A673 (cell line): ENCODE measurements at regions of chrX and their contacts with region 1.

Region 1: DNA sequence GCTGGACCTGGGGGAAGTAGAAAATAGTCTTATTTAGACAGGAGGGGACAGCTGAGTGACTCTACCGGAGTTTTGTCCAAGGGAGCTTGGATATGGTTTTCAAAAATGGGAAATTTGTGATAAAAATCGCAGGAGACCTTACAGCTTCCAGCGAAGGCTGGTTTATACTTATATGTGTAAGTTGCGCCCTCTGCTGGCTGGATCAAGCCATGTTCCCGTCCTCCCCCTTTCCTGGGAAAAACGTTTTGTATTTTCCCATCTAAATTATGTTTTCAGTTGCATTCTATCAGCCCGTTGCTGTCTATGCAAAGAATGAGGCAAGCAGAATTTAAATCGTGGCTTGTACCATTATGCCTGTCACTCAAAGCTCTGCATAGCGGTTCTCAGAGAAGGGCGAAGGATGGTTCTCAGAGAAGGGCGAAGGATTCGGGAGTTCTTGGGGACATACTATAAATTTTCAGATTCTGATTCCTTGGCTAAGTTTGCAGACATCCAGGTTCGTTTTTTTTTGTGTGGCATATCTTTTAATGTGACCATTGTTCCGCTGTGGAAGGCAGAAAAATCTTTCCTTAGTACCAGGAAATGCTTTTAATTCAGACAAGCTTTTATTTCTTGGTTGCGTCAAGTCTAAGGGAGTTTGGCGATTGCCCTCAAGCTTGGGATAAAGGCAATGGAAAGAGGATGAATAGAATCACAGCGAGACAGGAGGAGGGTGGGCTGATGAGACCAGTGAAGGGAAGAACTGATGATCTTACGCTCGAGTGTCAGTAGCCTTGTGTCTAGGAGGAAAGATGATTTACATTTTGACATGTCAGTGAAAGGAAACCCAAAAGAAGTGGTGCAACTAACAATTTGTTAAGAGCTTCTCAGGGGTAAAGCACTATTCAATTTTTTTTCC is 128.5 kb upstream of the ARX start:
- DNase-seq: peak; percentile 89
- H3K4me3 ChIP-seq: peak overlapping the region; percentile 38
- H3K27ac ChIP-seq: peak overlapping the region; percentile 85
- H3K4me1 ChIP-seq: peaks cover 42% of the 10 kb centered on the region
- H3K27me3 ChIP-seq: no peaks in the 10 kb centered on the region
- CTCF ChIP-seq: peak; percentile 93

Region 2: DNA sequence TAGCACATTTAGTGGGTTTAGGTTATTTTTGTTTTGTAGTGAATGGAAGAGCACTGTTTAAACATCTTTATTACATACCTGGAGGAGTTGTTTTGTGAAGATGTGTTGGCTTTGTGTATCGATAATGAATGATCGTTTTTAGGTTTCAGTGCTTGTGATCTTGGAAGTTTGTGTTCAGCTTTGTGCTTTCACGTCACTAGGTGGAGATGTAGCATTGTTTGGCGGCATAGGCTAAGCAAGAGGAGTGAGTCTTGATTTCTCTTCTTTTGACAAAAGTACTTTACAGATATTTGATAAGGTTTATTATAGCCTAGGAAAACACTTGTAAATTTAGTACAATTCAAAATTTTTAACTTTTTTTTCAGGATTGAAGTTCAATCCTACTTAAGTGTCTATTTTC is 628.8 kb before region 1 on chrX:
- CTCF ChIA-PET with region 1: no interaction called
- POLR2A ChIA-PET with region 1: no interaction called
- intact Hi-C with region 1: loop called (anchors 10 kb)
- DNase-seq: peak; percentile 39
- H3K4me3 ChIP-seq: no peak overlapping the region
- H3K27ac ChIP-seq: no peak overlapping the region
- H3K4me1 ChIP-seq: no peaks in the 10 kb centered on the region
- H3K27me3 ChIP-seq: peaks cover 18% of the 10 kb centered on the region
- CTCF ChIP-seq: peak; percentile 57

Region 3: GRCh38 chrX:24748202-24748843 is 396.0 kb before region 1 on chrX:
- CTCF ChIA-PET with region 1: interaction called, 5 read pairs
- POLR2A ChIA-PET with region 1: no interaction called
- intact Hi-C with region 1: loop called (anchors 2 kb)
- DNase-seq: no peak
- H3K4me3 ChIP-seq: no peak overlapping the region
- H3K27ac ChIP-seq: no peak overlapping the region
- H3K4me1 ChIP-seq: no peaks in the 10 kb centered on the region
- H3K27me3 ChIP-seq: peaks cover 9% of the 10 kb centered on the region
- CTCF ChIP-seq: no peak

Region 4: GRCh38 chrX:24990535-24990934 is 153.8 kb before region 1 on chrX:
- CTCF ChIA-PET with region 1: no interaction called
- POLR2A ChIA-PET with region 1: no interaction called
- intact Hi-C with region 1: no loop called
- DNase-seq: peak; percentile 93
- H3K4me3 ChIP-seq: no peak overlapping the region
- H3K27ac ChIP-seq: no peak overlapping the region
- H3K4me1 ChIP-seq: peaks cover 25% of the 10 kb centered on the region
- H3K27me3 ChIP-seq: peaks cover 14% of the 10 kb centered on the region
- CTCF ChIP-seq: peak; percentile 53; the same call in 1 of the 2 replicates

Region 5: DNA sequence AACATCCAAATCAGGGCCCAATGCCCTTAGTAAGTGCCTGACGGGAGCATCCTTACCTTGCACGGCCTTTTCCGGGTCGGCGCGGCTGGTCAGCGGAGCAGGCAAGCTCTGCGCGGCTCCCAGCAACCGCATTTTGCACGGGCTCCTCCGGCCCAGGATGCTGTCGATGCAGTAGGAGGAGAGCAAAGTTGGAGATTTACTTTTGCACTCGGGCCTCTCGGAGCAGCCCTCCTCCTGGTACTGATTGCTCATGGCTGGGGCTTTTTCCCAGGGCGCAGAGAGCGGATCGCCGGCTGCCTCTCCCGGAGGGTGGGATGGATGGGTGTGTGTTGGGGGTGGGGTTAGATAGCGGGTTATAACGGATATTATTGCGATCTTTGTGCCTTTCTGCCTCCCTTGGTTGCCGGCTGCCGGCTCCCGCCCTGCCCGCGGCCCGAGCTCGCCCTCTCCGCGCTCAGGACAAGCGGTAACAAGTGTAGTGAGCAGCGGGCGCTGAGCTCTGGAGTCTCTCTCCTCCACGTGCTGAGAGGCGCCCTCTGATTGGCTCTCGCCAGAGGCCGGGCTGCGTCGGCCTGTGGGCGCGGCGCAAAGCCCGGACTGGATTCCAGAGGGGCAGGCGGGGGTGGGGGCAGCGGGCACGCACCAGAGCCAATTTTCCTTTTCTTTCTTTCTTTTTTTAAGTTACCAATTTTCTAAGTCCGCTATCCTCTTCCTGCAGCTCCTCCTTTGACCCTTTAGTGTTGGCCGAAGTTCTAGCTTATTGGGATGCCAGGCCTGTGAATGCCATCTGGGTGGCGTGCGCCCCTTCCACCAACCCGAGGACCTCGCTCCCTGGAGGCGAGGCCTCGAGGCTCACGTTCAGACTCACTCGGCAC is 128.6 kb before region 1 on chrX and contains the start of gene ARX:
- CTCF ChIA-PET with region 1: interaction called, 5 read pairs
- POLR2A ChIA-PET with region 1: interaction called, 4 read pairs
- intact Hi-C with region 1: loop called (anchors 2 kb)
- DNase-seq: peak; percentile 91
- H3K4me3 ChIP-seq: peak within 1 kb of the TSS; percentile 59
- H3K27ac ChIP-seq: peak within 1 kb of the TSS; percentile 66
- H3K4me1 ChIP-seq: peaks cover 31% of the 10 kb centered on the region
- H3K27me3 ChIP-seq: no peaks in the 10 kb centered on the region
- CTCF ChIP-seq: no peak
- total RNA-seq, gene ARX: 32.0 and 44.4 TPM in 2 replicates

Region 6: GRCh38 chrX:25067271-25068172 is 76.8 kb before region 1 on chrX:
- CTCF ChIA-PET with region 1: interaction called, 9 read pairs
- POLR2A ChIA-PET with region 1: interaction called, 4 read pairs
- intact Hi-C with region 1: loop called (anchors 1 kb)
- DNase-seq: peak; percentile 74
- H3K4me3 ChIP-seq: no peak overlapping the region
- H3K27ac ChIP-seq: peak overlapping the region; percentile 97
- H3K4me1 ChIP-seq: peaks cover 50% of the 10 kb centered on the region
- H3K27me3 ChIP-seq: no peaks in the 10 kb centered on the region
- CTCF ChIP-seq: peak; percentile 39; the same call in 1 of the 2 replicates

Region 7: GRCh38 chrX:25079020-25079419 is 65.3 kb before region 1 on chrX:
- CTCF ChIA-PET with region 1: interaction called, 15 read pairs
- POLR2A ChIA-PET with region 1: no interaction called
- intact Hi-C with region 1: no loop called
- DNase-seq: peak; percentile 65
- H3K4me3 ChIP-seq: no peak overlapping the region
- H3K27ac ChIP-seq: no peak overlapping the region
- H3K4me1 ChIP-seq: peaks cover 50% of the 10 kb centered on the region
- H3K27me3 ChIP-seq: no peaks in the 10 kb centered on the region
- CTCF ChIP-seq: peak; percentile 37; the same call in 1 of the 2 replicates

Region 8: GRCh38 chrX:25241461-25241860 is 97.2 kb after region 1 on chrX:
- CTCF ChIA-PET with region 1: no interaction called
- POLR2A ChIA-PET with region 1: no interaction called
- intact Hi-C with region 1: no loop called
- DNase-seq: no peak
- H3K4me3 ChIP-seq: no peak overlapping the region
- H3K27ac ChIP-seq: no peak overlapping the region
- H3K4me1 ChIP-seq: peaks cover 9% of the 10 kb centered on the region
- H3K27me3 ChIP-seq: peaks cover 4% of the 10 kb centered on the region
- CTCF ChIP-seq: no peak